HepG2 (cell line): ENCODE measurements at regions of chr17 and their contacts with region 1.

Region 1: GRCh38 chr17:75131280-75132017 is at the start of gene NT5C:
- DNase-seq: peak; percentile 79
- ATAC-seq: peak; percentile 91
- H3K4me3 ChIP-seq: peak within 1 kb of the TSS; percentile 77 to 96 (median 83)
- H3K27ac ChIP-seq: peak within 1 kb of the TSS; percentile 86
- H3K4me1 ChIP-seq: peaks cover 26% of the 10 kb centered on the region
- H3K27me3 ChIP-seq: no peaks in the 10 kb centered on the region
- CTCF ChIP-seq: peak; percentile 87
- EP300 ChIP-seq: peak in 1 of 2 experiments; percentile 13; a peak in 1 of 4 replicates
- POLR2A ChIP-seq: peak; percentile 85 to 94
- RAD21 ChIP-seq: peak; percentile 91
- total RNA-seq, gene NT5C: 31.4 and 48.6 TPM in 2 replicates

Region 2: GRCh38 chr17:75096082-75096625 is 35.3 kb before region 1 on chr17:
- CTCF ChIA-PET with region 1: no interaction called
- POLR2A ChIA-PET with region 1: interaction called, 10 read pairs
- in situ Hi-C with region 1: no loop called
- intact Hi-C with region 1: no loop called
- DNase-seq: peak; percentile 91
- ATAC-seq: peak; percentile 66
- H3K4me3 ChIP-seq: peak overlapping the region in 1 of 3 experiments; percentile 22; a peak in 1 of 6 replicates
- H3K27ac ChIP-seq: no peak overlapping the region
- H3K4me1 ChIP-seq: peaks cover 61% of the 10 kb centered on the region
- H3K27me3 ChIP-seq: peaks cover 3 to 25% of the 10 kb centered on the region in 2 experiments; a peak in 3 of 5 replicates
- CTCF ChIP-seq: peak; percentile 14
- EP300 ChIP-seq: peak; percentile 69 to 79; a peak in 3 of 4 replicates
- POLR2A ChIP-seq: 0 out of 4 replicates have a peak, but pooled peaks of 1 of the 2 experiments have one; percentile 26
- RAD21 ChIP-seq: peak; percentile 24; the same call in 1 of the 2 replicates

Region 3: DNA sequence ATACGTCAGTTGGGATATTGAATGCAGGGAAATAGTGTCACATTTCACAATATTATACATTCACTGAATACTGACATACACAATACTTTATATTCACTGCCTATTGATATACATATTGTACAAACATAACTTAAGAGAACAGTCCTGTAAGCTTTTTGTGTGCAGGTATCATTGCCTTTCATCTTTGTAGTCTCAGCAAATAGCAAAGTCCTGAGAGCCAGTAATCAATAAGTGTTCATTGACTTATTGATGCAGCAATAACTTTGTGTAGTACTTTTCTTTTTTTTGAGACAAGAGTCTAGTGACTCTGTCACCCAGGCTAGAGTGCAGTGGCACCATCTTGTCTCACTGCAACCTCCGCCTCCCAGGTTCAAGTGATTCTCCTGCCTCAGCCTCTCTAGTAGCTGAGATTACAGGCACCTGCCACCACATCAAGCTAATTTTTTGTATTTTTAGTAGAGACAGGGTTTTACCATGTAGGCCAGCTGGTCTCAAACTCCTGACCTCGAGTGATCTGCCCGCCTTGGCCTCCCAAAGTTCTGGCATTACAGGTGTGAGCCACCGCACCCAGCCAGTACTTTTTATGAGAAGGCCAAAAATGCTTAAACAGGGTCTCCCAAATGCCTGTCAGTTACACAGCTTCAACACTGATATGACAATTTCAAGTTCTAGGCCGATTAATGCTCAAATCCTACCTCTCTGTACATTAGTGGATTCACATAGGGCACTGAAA is 68.6 kb after region 1 on chr17:
- CTCF ChIA-PET with region 1: interaction called, 3 read pairs
- POLR2A ChIA-PET with region 1: interaction called, 7 read pairs
- in situ Hi-C with region 1: no loop called
- intact Hi-C with region 1: loop called (anchors 5 kb)
- DNase-seq: peak; percentile 53
- ATAC-seq: peak; percentile 30
- H3K4me3 ChIP-seq: peak overlapping the region in 1 of 3 experiments; percentile 59; a peak in 2 of 6 replicates
- H3K27ac ChIP-seq: peak overlapping the region; percentile 62
- H3K4me1 ChIP-seq: peaks cover 43% of the 10 kb centered on the region
- H3K27me3 ChIP-seq: no peaks in the 10 kb centered on the region
- CTCF ChIP-seq: no peak
- EP300 ChIP-seq: peak in 1 of 2 experiments; percentile 81; a peak in 1 of 4 replicates
- POLR2A ChIP-seq: no peak
- RAD21 ChIP-seq: no peak